HepG2 (cell line): ENCODE measurements at regions of chr12 and their contacts with region 1.

Region 1: GRCh38 chr12:38138225-38139221 is 178.1 kb upstream of the ALG10B start:
- DNase-seq: peak; percentile 60
- ATAC-seq: peak; percentile 93
- H3K4me3 ChIP-seq: peak overlapping the region; percentile 42 to 60 (median 53)
- H3K27ac ChIP-seq: no peak overlapping the region
- H3K4me1 ChIP-seq: no peaks in the 10 kb centered on the region
- H3K27me3 ChIP-seq: no peaks in the 10 kb centered on the region
- CTCF ChIP-seq: peak; percentile 85
- EP300 ChIP-seq: no peak
- POLR2A ChIP-seq: no peak
- RAD21 ChIP-seq: peak; percentile 40; the same call in 1 of the 2 replicates

Region 2: GRCh38 chr12:38053655-38054464 is 84.7 kb before region 1 on chr12:
- CTCF ChIA-PET with region 1: interaction called, 9 read pairs
- POLR2A ChIA-PET with region 1: no interaction called
- in situ Hi-C with region 1: loop called (anchors 5 kb)
- intact Hi-C with region 1: loop called (anchors 1 kb)
- DNase-seq: peak; percentile 70
- ATAC-seq: peak; percentile 91
- H3K4me3 ChIP-seq: peak overlapping the region in 1 of 3 experiments; percentile 40; a peak in 1 of 6 replicates
- H3K27ac ChIP-seq: no peak overlapping the region
- H3K4me1 ChIP-seq: no peaks in the 10 kb centered on the region
- H3K27me3 ChIP-seq: no peaks in the 10 kb centered on the region
- CTCF ChIP-seq: peak; percentile 95
- EP300 ChIP-seq: no peak
- POLR2A ChIP-seq: no peak
- RAD21 ChIP-seq: peak; percentile 89

Region 3: GRCh38 chr12:38316391-38317129 is 178.0 kb after region 1 on chr12 and contains the start of gene ALG10B:
- CTCF ChIA-PET with region 1: interaction called, 8 read pairs
- POLR2A ChIA-PET with region 1: no interaction called
- in situ Hi-C with region 1: loop called (anchors 10 kb)
- intact Hi-C with region 1: loop called (anchors 1 kb)
- DNase-seq: peak; percentile 92
- ATAC-seq: peak; percentile 100
- H3K4me3 ChIP-seq: peak within 1 kb of the TSS; percentile 78 to 85 (median 80)
- H3K27ac ChIP-seq: peak within 1 kb of the TSS; percentile 78
- H3K4me1 ChIP-seq: peaks cover 10% of the 10 kb centered on the region; the same call in 1 of the 2 replicates
- H3K27me3 ChIP-seq: no peaks in the 10 kb centered on the region
- CTCF ChIP-seq: peak; percentile 64
- EP300 ChIP-seq: peak in 1 of 2 experiments; percentile 34; a peak in 1 of 4 replicates
- POLR2A ChIP-seq: peak; percentile 42 to 44; a peak in 2 of 4 replicates
- RAD21 ChIP-seq: no peak
- total RNA-seq, gene ALG10B: 6.3 and 9.3 TPM in 2 replicates

Region 4: GRCh38 chr12:38544330-38545066 is 406.0 kb after region 1 on chr12:
- CTCF ChIA-PET with region 1: no interaction called
- POLR2A ChIA-PET with region 1: no interaction called
- in situ Hi-C with region 1: no loop called
- intact Hi-C with region 1: no loop called
- DNase-seq: no peak
- ATAC-seq: no peak
- H3K4me3 ChIP-seq: no peak overlapping the region
- H3K27ac ChIP-seq: no peak overlapping the region
- H3K4me1 ChIP-seq: no peaks in the 10 kb centered on the region
- H3K27me3 ChIP-seq: no peaks in the 10 kb centered on the region
- CTCF ChIP-seq: no peak
- EP300 ChIP-seq: no peak
- POLR2A ChIP-seq: no peak
- RAD21 ChIP-seq: no peak

Region 5: GRCh38 chr12:38759626-38760025 is 621.1 kb after region 1 on chr12:
- CTCF ChIA-PET with region 1: no interaction called
- POLR2A ChIA-PET with region 1: no interaction called
- in situ Hi-C with region 1: no loop called
- intact Hi-C with region 1: loop called (anchors 10 kb)
- DNase-seq: no peak
- ATAC-seq: no peak
- H3K4me3 ChIP-seq: no peak overlapping the region
- H3K27ac ChIP-seq: no peak overlapping the region
- H3K4me1 ChIP-seq: no peaks in the 10 kb centered on the region
- H3K27me3 ChIP-seq: no peaks in the 10 kb centered on the region
- CTCF ChIP-seq: no peak
- EP300 ChIP-seq: no peak
- POLR2A ChIP-seq: no peak
- RAD21 ChIP-seq: no peak